Activated T-helper 1 cell treated with anti-CD3 and anti-CD28 coated beads, Interleukin-12 subunit alpha, Interleukin-12 subunit beta, Interleukin-2, Interleukin-4 antibody, amounts not matched to agents 30 ng/mL and 10 ng/mL and 1 ng/mL, durations not matched to agents 14 hours and 24 hours and 36 hours (primary cell): ENCODE measurements at regions of chrX and their contacts with region 1.

Region 1: GRCh38 chrX:79270401-79270800 is 96.7 kb downstream of the ITM2A start:
- DNase-seq: peak; percentile 44
- H3K4me3 Mint-ChIP-seq: no peak overlapping the region
- H3K27ac Mint-ChIP-seq: no peak overlapping the region
- H3K4me1 Mint-ChIP-seq: peaks cover 33% of the 10 kb centered on the region
- H3K27me3 Mint-ChIP-seq: no peaks in the 10 kb centered on the region

Region 2: DNA sequence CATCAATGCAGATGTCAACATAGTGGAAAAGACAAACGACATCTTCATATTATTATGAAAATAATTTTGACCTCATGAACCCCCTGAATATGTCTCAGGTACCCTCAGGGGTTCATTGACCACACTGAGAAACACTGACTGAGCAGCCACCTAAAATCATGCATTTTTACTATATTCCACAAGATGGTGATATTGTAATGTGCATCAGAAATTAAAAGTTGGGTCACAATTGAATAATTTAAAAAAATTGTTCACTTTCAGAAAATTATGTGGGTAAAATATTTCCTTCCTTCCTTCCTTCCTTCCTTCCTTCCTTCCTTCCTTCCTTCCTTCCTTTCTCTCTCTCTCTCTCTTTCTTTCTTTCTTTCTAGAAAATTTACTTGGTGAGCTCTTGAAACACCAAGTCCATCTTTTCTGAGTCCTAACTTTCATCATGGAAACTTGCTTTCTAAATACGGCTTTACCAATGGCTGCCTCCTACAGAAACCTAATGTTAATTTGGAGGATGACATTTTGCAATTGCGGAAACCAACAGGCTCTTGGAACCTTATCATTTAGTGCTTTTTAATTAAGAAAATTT is 714.9 kb before region 1 on chrX:
- intact Hi-C with region 1: loop called (anchors 1 kb)
- DNase-seq: no peak
- H3K4me3 Mint-ChIP-seq: no peak overlapping the region
- H3K27ac Mint-ChIP-seq: peak overlapping the region; percentile 61
- H3K4me1 Mint-ChIP-seq: peaks cover 5% of the 10 kb centered on the region
- H3K27me3 Mint-ChIP-seq: no peaks in the 10 kb centered on the region

Region 3: GRCh38 chrX:79096145-79096556 is 174.2 kb before region 1 on chrX:
- intact Hi-C with region 1: loop called (anchors 2 kb)
- DNase-seq: no peak
- H3K4me3 Mint-ChIP-seq: peak overlapping the region; percentile 63
- H3K27ac Mint-ChIP-seq: peak overlapping the region; percentile 91
- H3K4me1 Mint-ChIP-seq: peaks cover 43% of the 10 kb centered on the region
- H3K27me3 Mint-ChIP-seq: no peaks in the 10 kb centered on the region

Region 4: GRCh38 chrX:79259073-79259689 is 11.2 kb before region 1 on chrX:
- intact Hi-C with region 1: loop called (anchors 1 kb)
- DNase-seq: peak; percentile 57
- H3K4me3 Mint-ChIP-seq: peak overlapping the region; percentile 45
- H3K27ac Mint-ChIP-seq: peak overlapping the region; percentile 87
- H3K4me1 Mint-ChIP-seq: peaks cover 86% of the 10 kb centered on the region
- H3K27me3 Mint-ChIP-seq: no peaks in the 10 kb centered on the region

Region 5: GRCh38 chrX:79366873-79367749 is 96.7 kb after region 1 on chrX and contains the start of gene ITM2A:
- intact Hi-C with region 1: loop called (anchors 2 kb)
- DNase-seq: peak; percentile 37
- H3K4me3 Mint-ChIP-seq: peak within 1 kb of the TSS; percentile 94
- H3K27ac Mint-ChIP-seq: peak within 1 kb of the TSS; percentile 95
- H3K4me1 Mint-ChIP-seq: peaks cover 35% of the 10 kb centered on the region
- H3K27me3 Mint-ChIP-seq: no peaks in the 10 kb centered on the region
- total RNA-seq, gene ITM2A: 114 and 116 TPM in 2 replicates